ENCODE measurements at regions of chr18 and their contacts with region 1.

Region 1: DNA sequence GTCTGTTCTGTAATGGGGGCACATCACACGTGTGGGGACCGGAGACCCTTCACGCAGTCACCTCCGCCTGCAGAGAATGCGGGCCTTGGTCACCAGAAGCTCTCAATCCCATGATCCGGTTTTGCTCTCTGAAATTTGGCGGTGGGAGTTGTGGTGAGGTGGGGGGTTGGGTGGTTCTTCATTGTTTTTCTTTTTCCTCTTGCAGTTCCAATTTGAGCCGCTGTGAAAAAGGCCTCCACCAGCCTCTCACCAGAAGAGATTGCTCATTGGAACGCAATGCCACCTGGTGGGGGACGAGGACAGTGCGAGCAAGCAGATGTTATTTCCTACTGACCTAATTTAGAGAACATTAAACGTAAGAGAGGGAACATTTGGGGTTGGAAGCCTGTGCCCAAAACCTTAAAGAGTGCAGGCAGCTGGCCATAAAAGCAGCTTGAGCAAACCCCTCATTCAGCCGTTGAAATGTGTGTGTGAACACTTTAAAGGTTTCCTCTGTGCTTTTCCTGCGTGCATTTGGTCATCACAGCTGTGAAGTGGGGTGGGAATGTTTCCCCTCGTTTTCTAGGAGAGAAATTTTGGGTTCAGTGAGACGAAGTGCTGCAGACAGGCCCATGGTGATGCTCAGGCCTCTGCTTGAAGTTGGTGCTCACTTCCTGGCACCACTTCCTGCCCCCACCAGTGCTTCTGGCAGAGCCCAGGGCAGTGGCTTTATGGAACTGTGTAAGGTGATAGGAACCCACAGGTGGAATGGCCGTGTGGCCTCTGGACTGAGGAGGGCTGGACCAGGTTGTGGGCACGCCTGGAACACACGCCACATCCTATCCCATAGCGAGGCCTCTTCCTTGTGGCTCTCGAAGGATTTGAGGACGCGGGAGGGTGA is 61.7 kb downstream of the ZCCHC2 start:
- DNase-seq: peak; percentile 83
- H3K4me3 ChIP-seq: peak overlapping the region; percentile 31
- H3K27ac ChIP-seq: peak overlapping the region; percentile 50
- H3K4me1 ChIP-seq: peaks cover 25% of the 10 kb centered on the region
- H3K27me3 ChIP-seq: no peaks in the 10 kb centered on the region
- CTCF ChIP-seq: peak; percentile 99

Region 2: GRCh38 chr18:62425465-62426195 is 158.9 kb before region 1 on chr18:
- intact Hi-C with region 1: loop called (anchors 5 kb)
- DNase-seq: peak; percentile 44
- H3K4me3 ChIP-seq: peak overlapping the region; percentile 58
- H3K27ac ChIP-seq: peak overlapping the region; percentile 92
- H3K4me1 ChIP-seq: peaks cover 26% of the 10 kb centered on the region
- H3K27me3 ChIP-seq: no peaks in the 10 kb centered on the region
- CTCF ChIP-seq: peak; percentile 87

Region 3: GRCh38 chr18:62479574-62479973 is 104.9 kb before region 1 on chr18:
- intact Hi-C with region 1: no loop called
- DNase-seq: no peak
- H3K4me3 ChIP-seq: no peak overlapping the region
- H3K27ac ChIP-seq: no peak overlapping the region
- H3K4me1 ChIP-seq: no peaks in the 10 kb centered on the region
- H3K27me3 ChIP-seq: no peaks in the 10 kb centered on the region
- CTCF ChIP-seq: no peak

Region 4: GRCh38 chr18:62526098-62527025 is 58.1 kb before region 1 on chr18:
- intact Hi-C with region 1: loop called (anchors 5 kb)
- DNase-seq: peak; percentile 86
- H3K4me3 ChIP-seq: peak overlapping the region; percentile 97
- H3K27ac ChIP-seq: peak overlapping the region; percentile 99
- H3K4me1 ChIP-seq: peaks cover 78% of the 10 kb centered on the region
- H3K27me3 ChIP-seq: no peaks in the 10 kb centered on the region
- CTCF ChIP-seq: no peak

Region 5: GRCh38 chr18:62714671-62715435 is 130.4 kb after region 1 on chr18:
- intact Hi-C with region 1: loop called (anchors 10 kb)
- DNase-seq: peak; percentile 99
- H3K4me3 ChIP-seq: peak overlapping the region; percentile 75
- H3K27ac ChIP-seq: peak overlapping the region; percentile 93
- H3K4me1 ChIP-seq: peaks cover 35% of the 10 kb centered on the region
- H3K27me3 ChIP-seq: no peaks in the 10 kb centered on the region
- CTCF ChIP-seq: peak; percentile 87

Region 6: GRCh38 chr18:62982600-62983251 is 398.2 kb after region 1 on chr18:
- intact Hi-C with region 1: loop called (anchors 5 kb)
- DNase-seq: no peak
- H3K4me3 ChIP-seq: peak overlapping the region; percentile 50
- H3K27ac ChIP-seq: no peak overlapping the region
- H3K4me1 ChIP-seq: peaks cover 8% of the 10 kb centered on the region
- H3K27me3 ChIP-seq: no peaks in the 10 kb centered on the region
- CTCF ChIP-seq: peak; percentile 83